ENCODE measurements at regions of chr4 and their contacts with region 1.

Region 1: GRCh38 chr4:74376888-74377483 is 12.0 kb downstream of the EREG start:
- DNase-seq: no peak
- H3K4me3 ChIP-seq: no peak overlapping the region
- H3K27ac ChIP-seq: no peak overlapping the region
- H3K4me1 ChIP-seq: no peaks in the 10 kb centered on the region
- H3K27me3 ChIP-seq: no peaks in the 10 kb centered on the region
- CTCF ChIP-seq: peak; percentile 8 to 68 (median 59)
- POLR2A ChIP-seq: no peak

Region 2: DNA sequence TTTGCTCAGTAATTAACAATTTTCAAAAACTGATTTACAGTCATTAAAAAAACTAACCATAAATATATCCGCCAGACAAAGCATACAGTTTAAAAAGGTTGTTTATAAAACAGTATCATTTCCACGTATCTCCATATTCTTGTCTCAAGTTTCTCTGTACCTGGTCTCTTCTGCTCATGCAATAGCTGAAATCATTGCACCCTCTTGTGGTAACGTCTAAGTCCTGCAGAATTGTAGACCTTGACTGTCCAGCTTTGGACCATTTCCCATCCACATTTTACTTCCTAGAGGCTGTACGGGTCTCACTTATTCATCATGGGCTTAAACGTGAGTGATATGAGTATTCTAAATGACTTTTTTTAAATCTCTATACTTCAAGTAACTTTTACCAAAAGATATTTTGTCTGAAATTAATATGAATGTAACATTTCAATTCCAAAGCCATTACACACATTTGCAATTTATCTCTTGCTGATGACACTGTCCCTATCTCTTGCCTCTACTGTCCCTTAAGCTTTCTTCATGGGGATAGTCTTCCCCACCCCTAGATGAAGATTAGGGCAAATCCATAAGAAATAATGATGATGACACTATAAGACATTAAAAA is 298.8 kb after region 1 on chr4:
- intact Hi-C with region 1: loop called (anchors 5 kb)
- DNase-seq: peak; percentile 19
- H3K4me3 ChIP-seq: no peak overlapping the region
- H3K27ac ChIP-seq: no peak overlapping the region
- H3K4me1 ChIP-seq: no peaks in the 10 kb centered on the region
- H3K27me3 ChIP-seq: no peaks in the 10 kb centered on the region
- CTCF ChIP-seq: peak; percentile 43 to 76 (median 59)
- POLR2A ChIP-seq: no peak